Endothelial cell of umbilical vein (primary cell): ENCODE measurements at regions of chr16 and their contacts with region 1.

Region 1: DNA sequence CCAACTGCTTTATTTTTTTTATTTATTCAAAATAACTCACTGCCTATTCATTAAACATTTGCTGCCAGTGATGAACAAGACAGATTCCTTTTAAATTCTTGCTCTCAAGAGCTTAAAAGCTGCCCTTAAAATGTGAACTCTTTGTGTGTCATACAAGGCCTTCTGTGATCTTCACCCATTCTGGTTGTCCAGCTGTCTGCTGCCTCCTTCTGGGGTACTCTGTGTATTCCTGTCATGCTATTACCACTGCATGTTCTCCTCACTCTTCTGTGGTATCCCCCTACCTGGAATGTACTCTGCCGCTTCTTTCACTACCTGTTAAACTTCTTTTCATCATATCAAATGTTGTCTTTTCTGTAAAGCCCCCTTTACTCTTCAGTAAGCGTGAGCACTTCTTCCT is 165.8 kb downstream of the CHD9 start:
- DNase-seq: peak; percentile 71
- H3K4me3 ChIP-seq: peak overlapping the region in 1 of 3 experiments; percentile 49
- H3K27ac ChIP-seq: peak overlapping the region; percentile 91
- H3K4me1 ChIP-seq: peaks cover 37% of the 10 kb centered on the region
- H3K27me3 ChIP-seq: no peaks in the 10 kb centered on the region
- CTCF ChIP-seq: peak; percentile 42 to 46
- POLR2A ChIP-seq: no peak

Region 2: GRCh38 chr16:52976539-52977167 is 243.9 kb before region 1 on chr16:
- CTCF ChIA-PET with region 1: interaction called, 17 read pairs
- POLR2A ChIA-PET with region 1: no interaction called
- dilution Hi-C with region 1: no loop called
- intact Hi-C with region 1: no loop called
- DNase-seq: peak; percentile 17
- H3K4me3 ChIP-seq: no peak overlapping the region
- H3K27ac ChIP-seq: no peak overlapping the region
- H3K4me1 ChIP-seq: no peaks in the 10 kb centered on the region
- H3K27me3 ChIP-seq: no peaks in the 10 kb centered on the region
- CTCF ChIP-seq: peak in 1 of 2 donors; percentile 31
- POLR2A ChIP-seq: no peak

Region 3: DNA sequence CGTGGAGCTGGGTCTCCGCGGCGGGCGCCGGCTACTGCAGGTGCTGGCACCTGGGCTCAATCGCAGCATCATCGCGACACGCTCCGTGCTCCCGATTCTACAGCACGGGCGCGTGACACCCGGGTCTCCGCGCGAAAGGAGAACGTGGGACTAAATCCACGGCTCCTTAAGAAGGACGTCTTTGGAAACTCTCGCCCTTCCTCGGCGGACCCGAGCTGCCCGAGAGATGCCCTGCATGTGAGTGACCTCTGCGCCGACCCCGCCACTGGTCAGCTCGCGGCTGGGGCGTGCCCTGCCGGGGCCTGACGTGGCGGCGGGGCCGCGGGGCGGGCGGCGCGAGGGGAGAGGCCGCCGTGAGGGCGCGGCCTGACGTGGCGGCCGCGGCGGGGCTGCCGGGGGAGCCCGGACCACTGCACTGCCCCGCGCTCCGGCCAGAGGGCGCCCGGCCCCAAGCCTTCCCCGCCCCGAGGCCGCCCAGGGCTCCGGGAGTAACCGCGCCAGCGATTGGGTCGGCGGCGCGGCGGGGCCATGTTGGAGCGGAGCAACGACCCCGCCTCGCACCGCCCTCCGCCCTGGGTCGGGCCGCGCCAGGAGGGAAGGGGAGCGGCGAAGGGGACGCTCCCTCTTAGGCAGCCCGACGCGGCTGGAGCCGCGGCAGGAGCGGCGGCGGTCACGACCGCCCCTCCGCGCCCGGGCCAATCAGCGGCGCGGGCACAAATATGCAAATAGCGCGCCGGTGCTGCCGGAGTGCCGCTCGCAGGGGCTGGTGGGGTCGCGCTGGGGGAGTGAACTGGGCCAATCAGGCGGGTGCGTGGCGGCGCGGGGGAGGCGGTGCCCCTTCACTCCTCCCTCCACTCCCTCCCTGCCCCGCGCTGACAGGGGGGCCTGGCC is 90.2 kb before region 1 on chr16:
- CTCF ChIA-PET with region 1: interaction called, 5 read pairs
- POLR2A ChIA-PET with region 1: no interaction called
- dilution Hi-C with region 1: no loop called
- intact Hi-C with region 1: loop called (anchors 1 kb)
- DNase-seq: peak; percentile 96
- H3K4me3 ChIP-seq: peak overlapping the region; percentile 71 to 92 (median 74)
- H3K27ac ChIP-seq: peak overlapping the region; percentile 89
- H3K4me1 ChIP-seq: peaks cover 18% of the 10 kb centered on the region
- H3K27me3 ChIP-seq: no peaks in the 10 kb centered on the region
- CTCF ChIP-seq: peak; percentile 55 to 63
- POLR2A ChIP-seq: peak; percentile 68

Region 4: DNA sequence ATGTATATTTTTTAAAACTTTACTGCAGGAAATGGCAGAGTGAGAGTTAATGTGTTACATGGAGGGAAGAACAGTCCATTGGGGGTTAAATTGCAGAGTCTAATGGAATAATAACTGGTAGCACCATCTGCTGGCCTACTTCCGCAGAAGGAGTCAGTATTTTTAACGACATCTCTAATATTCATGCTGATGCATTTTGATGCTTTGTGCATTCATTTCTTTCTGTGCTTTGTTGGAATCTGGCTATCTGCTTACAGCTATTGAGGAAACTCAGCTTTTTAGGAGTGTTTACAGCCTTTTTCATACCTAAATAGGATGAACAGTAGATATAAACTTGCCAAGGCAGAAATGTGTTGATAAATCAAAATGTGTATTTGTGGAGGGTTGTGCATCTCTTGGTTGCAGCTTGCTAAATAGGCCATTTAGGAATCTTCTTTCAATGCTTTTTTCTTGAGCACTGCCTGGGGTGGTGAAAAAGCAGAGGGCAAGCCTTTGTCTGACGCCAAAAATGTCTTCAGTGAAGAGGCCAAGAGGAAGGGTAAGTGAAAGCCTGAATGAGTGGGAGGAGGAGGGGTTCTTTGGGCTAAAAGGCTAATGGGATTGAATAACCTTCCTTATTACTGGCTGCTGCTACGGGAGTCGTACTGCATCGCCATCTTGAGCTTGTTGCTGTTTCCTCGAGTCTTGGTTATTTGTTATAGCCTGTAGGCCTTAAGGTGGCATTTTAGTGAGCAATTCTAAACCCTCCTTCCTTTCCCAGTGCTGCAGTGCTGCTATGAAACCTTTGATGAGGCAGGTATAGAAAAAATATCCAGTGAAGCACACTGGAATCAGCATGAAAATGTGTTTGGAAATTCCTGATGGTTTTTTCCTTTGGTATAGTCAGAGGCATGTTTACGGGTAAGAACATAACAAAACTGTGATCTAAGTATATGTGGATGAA is 12.5 kb before region 1 on chr16:
- CTCF ChIA-PET with region 1: interaction called, 47 read pairs
- POLR2A ChIA-PET with region 1: interaction called, 5 read pairs
- dilution Hi-C with region 1: no loop called
- intact Hi-C with region 1: loop called (anchors 1 kb)
- DNase-seq: peak; percentile 88
- H3K4me3 ChIP-seq: peak overlapping the region; percentile 34 to 91 (median 70)
- H3K27ac ChIP-seq: peak overlapping the region; percentile 92
- H3K4me1 ChIP-seq: peaks cover 41% of the 10 kb centered on the region
- H3K27me3 ChIP-seq: no peaks in the 10 kb centered on the region
- CTCF ChIP-seq: peak; percentile 33 to 51
- POLR2A ChIP-seq: peak; percentile 53

Region 5: DNA sequence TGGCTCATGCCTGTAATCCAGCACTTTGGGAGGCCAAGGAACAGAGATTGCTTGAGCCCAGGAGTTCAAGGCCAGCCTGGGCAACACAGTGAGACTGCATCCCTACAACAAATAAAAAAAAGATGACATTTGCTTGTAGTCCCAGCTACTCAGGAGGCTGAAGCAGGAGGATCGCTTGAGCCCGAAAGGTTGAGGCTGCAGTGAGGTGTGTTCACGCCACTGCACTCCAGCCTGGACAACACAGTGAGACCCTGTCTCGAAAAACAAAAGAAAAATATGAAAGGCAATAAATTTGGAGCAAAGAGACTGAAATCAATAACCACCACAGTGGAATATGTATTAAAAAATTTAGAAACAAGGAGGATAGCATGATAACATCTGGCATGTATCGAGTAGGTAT is 69.9 kb after region 1 on chr16:
- CTCF ChIA-PET with region 1: no interaction called
- POLR2A ChIA-PET with region 1: no interaction called
- dilution Hi-C with region 1: no loop called
- intact Hi-C with region 1: no loop called
- DNase-seq: no peak
- H3K4me3 ChIP-seq: no peak overlapping the region
- H3K27ac ChIP-seq: no peak overlapping the region
- H3K4me1 ChIP-seq: peaks cover 3% of the 10 kb centered on the region
- H3K27me3 ChIP-seq: no peaks in the 10 kb centered on the region
- CTCF ChIP-seq: no peak
- POLR2A ChIP-seq: no peak

Region 6: GRCh38 chr16:53358884-53359283 is 138.3 kb after region 1 on chr16:
- CTCF ChIA-PET with region 1: no interaction called
- POLR2A ChIA-PET with region 1: no interaction called
- dilution Hi-C with region 1: no loop called
- intact Hi-C with region 1: no loop called
- DNase-seq: no peak
- H3K4me3 ChIP-seq: no peak overlapping the region
- H3K27ac ChIP-seq: no peak overlapping the region
- H3K4me1 ChIP-seq: no peaks in the 10 kb centered on the region
- H3K27me3 ChIP-seq: no peaks in the 10 kb centered on the region
- CTCF ChIP-seq: no peak
- POLR2A ChIP-seq: no peak